Caco-2 (cell line): ENCODE measurements at regions of chr19 and their contacts with region 1.

Region 1: GRCh38 chr19:47608074-47608918 is 638 bp upstream of the BICRA start:
- DNase-seq: peak; percentile 94 to 99
- H3K4me3 ChIP-seq: peak overlapping the region; percentile 99
- H3K4me3 Mint-ChIP-seq: peak overlapping the region; percentile 91
- H3K27ac Mint-ChIP-seq: peak overlapping the region; percentile 91
- H3K4me1 ChIP-seq: peaks cover 27% of the 10 kb centered on the region
- H3K4me1 Mint-ChIP-seq: peaks cover 11% of the 10 kb centered on the region
- H3K27me3 ChIP-seq: no peaks in the 10 kb centered on the region
- H3K27me3 Mint-ChIP-seq: no peaks in the 10 kb centered on the region
- CTCF ChIP-seq: peak in 1 of 2 experiments; percentile 29

Region 2: DNA sequence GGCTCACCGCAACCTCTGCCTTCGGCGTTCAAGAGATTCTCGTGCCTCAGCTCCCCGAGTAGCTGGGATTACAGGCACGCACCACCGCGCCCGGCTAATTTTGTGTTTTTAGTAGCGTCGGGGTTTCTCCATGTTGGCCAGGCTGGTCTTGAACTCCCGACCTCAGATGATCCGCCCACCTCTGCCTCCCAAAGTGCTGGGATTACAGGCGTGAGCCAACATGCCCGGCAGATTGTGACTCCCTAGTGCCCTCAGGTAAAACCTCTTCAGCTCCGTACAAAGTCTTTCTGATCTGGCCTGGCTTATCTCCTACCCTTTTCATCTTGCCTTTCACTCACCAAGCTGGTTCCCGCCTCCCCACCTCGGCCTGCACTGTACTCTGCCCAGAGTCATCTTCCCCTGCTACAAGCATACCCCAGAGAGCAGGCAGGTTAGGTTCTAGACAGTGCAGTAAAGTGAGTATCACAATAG is 15.7 kb after region 1 on chr19:
- CTCF ChIA-PET with region 1: interaction called, 4 read pairs
- POLR2A ChIA-PET with region 1: interaction called, 30 read pairs
- intact Hi-C with region 1: loop called (anchors 2 kb)
- DNase-seq: peak; percentile 94 to 96
- H3K4me3 ChIP-seq: no peak overlapping the region
- H3K4me3 Mint-ChIP-seq: peak overlapping the region; percentile 67
- H3K27ac Mint-ChIP-seq: peak overlapping the region; percentile 84
- H3K4me1 ChIP-seq: peaks cover 82% of the 10 kb centered on the region
- H3K4me1 Mint-ChIP-seq: peaks cover 50% of the 10 kb centered on the region
- H3K27me3 ChIP-seq: no peaks in the 10 kb centered on the region
- H3K27me3 Mint-ChIP-seq: no peaks in the 10 kb centered on the region
- CTCF ChIP-seq: no peak

Region 3: DNA sequence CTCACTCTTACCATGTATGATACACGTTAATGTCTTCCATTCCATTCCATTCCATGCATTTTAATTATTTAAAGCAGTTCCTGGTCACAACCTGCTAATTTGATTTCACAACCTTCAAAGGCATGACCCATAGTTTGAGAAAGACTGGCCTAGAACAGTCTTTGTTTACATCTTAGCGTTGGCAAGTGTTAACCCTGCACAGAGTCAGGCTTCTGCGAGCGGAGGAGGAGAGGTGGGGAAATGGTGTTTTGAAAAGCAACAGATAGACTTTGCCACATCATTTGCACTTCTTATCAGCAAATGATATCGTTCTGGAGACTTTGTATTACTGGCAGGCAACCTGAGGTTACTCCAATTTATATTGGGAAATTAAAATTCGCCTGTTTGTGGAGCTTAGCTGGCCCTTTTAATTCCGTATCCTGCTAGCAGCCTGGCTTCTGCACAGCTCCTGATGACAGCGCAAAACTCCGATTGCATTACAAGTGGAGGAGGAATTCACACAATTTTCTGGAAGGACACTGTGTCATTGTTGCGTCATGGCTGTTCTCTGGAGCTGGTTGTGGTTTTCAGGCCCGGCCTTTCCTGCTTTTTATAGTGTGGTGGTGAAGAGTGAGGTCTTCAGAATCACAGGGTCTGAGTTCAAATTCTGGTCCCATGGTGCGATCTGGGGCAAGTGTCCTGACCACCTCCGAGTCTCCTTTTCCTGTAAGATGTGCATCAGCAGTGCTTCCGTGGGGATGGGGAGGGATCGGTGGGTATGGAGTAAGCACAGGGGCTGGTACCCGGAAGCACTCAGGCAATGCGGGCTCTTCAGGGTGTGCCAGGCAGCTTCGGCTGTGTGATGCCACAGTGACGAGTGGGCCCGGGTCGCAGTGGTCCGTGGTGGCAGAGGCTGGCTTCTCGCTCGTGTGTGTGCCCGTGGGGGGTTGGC is 55.8 kb after region 1 on chr19:
- CTCF ChIA-PET with region 1: interaction called, 10 read pairs
- POLR2A ChIA-PET with region 1: interaction called, 3 read pairs
- intact Hi-C with region 1: loop called (anchors 2 kb)
- DNase-seq: peak; percentile 73
- H3K4me3 ChIP-seq: no peak overlapping the region
- H3K4me3 Mint-ChIP-seq: peak overlapping the region; percentile 53
- H3K27ac Mint-ChIP-seq: peak overlapping the region; percentile 94
- H3K4me1 ChIP-seq: peaks cover 94% of the 10 kb centered on the region
- H3K4me1 Mint-ChIP-seq: peaks cover 65% of the 10 kb centered on the region
- H3K27me3 ChIP-seq: no peaks in the 10 kb centered on the region
- H3K27me3 Mint-ChIP-seq: no peaks in the 10 kb centered on the region
- CTCF ChIP-seq: no peak

Region 4: DNA sequence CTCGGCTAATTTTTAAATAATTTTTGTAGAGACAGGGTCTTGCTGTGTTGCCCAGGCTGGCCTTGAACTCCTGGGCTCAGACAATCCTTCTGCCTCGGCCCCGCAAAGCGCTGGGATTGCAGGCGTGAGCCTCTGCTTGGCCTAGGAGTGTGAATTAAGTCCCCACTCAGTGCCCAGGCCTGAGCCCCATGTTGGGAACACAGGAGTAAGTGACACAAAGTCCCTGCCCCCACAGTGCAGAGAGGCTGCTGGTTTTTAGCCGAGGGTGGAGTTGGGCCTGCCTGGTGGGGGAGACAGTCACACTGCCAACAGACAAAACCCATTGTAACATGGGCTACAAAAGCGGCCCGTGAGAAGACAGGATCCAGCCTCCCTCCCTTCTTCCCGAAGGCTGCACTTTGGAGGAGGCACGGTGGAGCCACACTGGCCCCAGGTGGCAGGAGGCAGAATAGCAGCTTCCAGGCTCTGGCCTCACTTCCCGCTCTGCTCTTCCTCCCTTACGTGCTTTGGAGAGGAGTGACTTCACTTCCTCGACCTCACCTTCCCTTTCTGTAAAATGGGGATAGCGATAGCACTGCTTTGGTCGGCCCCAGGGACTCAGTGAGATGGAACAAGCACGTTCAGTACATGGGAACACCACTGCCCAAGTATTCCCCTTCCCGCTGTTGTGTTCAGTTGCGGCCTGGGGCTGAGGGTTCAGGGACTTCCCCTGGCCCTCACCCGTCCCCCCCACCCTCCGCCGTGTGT is 89.7 kb after region 1 on chr19:
- CTCF ChIA-PET with region 1: no interaction called
- POLR2A ChIA-PET with region 1: no interaction called
- intact Hi-C with region 1: loop called (anchors 1 kb)
- DNase-seq: peak; percentile 84 to 87
- H3K4me3 ChIP-seq: no peak overlapping the region
- H3K4me3 Mint-ChIP-seq: no peak overlapping the region
- H3K27ac Mint-ChIP-seq: peak overlapping the region; percentile 56
- H3K4me1 ChIP-seq: peaks cover 6% of the 10 kb centered on the region
- H3K4me1 Mint-ChIP-seq: no peaks in the 10 kb centered on the region
- H3K27me3 ChIP-seq: no peaks in the 10 kb centered on the region
- H3K27me3 Mint-ChIP-seq: no peaks in the 10 kb centered on the region
- CTCF ChIP-seq: peak; percentile 99